Heart left ventricle (tissue), 16 donors: ENCODE measurements at regions of chr6 and their contacts with region 1.

Region 1: DNA sequence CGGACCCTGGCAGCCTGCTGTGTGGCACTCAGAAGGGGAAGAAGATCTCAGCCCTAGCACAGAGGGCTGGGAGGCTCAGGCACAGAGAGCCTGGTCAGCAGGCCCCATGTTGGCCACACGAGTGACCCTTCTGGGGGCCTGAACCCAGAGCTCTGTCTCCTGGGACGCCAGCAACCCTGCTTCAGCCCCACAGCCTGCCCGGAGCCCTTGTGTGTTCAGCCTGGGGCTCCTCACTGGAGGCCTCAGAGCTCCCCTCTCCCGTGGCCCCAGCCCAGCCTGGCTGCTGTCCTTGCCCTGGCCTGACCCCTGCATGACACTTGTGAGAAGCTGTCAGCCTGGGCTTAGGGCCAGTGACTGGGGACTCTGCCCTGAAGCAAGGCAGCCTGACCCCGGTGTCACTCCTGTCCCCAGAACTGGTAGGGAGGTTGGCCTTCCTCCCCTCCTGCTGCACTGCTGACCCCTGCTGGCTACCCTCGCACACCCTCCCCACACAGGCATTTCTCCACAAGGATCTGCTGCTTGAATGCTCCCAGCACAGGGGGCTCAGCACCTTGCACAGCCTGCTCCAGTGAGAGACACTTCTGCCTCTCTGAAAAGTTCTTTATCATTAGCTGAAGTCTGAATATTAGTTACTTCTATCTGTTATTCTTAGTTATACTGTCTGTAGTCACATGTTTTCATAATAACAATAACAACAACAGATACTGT is 15.4 kb upstream of the IP6K3 start:
- DNase-seq: peak; percentile 79 to 94 (median 88)
- ATAC-seq: peak; percentile 83 to 95 (median 90)
- H3K4me3 ChIP-seq: no peak overlapping the region
- H3K27ac ChIP-seq: peak overlapping the region in 10 of 12 donors; percentile 51 to 86 (median 74)
- H3K4me1 ChIP-seq: peaks cover 0 to 26% (median 15%) of the 10 kb centered on the region in 12 donors
- H3K27me3 ChIP-seq: no peaks in the 10 kb centered on the region
- CTCF ChIP-seq: peak; percentile 56 to 81 (median 68)
- POLR2A ChIP-seq: no peak

Region 2: GRCh38 chr6:32940656-32941213 is 821.3 kb before region 1 on chr6 and contains the start of gene HLA-DMB:
- intact Hi-C with region 1: no loop called
- DNase-seq: peak in 3 of 5 donors; percentile 37 to 80 (median 67)
- ATAC-seq: peak; percentile 92 to 97 (median 96)
- H3K4me3 ChIP-seq: peak within 1 kb of the TSS; percentile 22 to 75 (median 56)
- H3K27ac ChIP-seq: peak within 1 kb of the TSS; percentile 52 to 97 (median 86)
- H3K4me1 ChIP-seq: peaks cover 0 to 94% (median 11%) of the 10 kb centered on the region in 12 donors
- H3K27me3 ChIP-seq: no peaks in the 10 kb centered on the region
- CTCF ChIP-seq: no peak
- POLR2A ChIP-seq: peak in 1 of 2 donors; percentile 22
- total RNA-seq, gene HLA-DMB: 2.7 to 127 (median 9.3) TPM

Region 3: GRCh38 chr6:33744001-33744848 is 17.9 kb before region 1 on chr6:
- intact Hi-C with region 1: loop called in 1 of 10 experiments (anchors 1 kb)
- DNase-seq: peak in 4 of 5 donors; percentile 59 to 72 (median 70)
- ATAC-seq: peak in 3 of 4 donors; percentile 6 to 34 (median 20)
- H3K4me3 ChIP-seq: peak overlapping the region in 11 of 12 donors; percentile 42 to 80 (median 57)
- H3K27ac ChIP-seq: peak overlapping the region; percentile 74 to 99 (median 92)
- H3K4me1 ChIP-seq: peaks cover 0 to 68% (median 26%) of the 10 kb centered on the region in 12 donors
- H3K27me3 ChIP-seq: peaks cover 0 to 5% (median 0%) of the 10 kb centered on the region in 9 donors
- CTCF ChIP-seq: peak; percentile 77 to 90 (median 86)
- POLR2A ChIP-seq: peak in 1 of 2 donors; percentile 18